ENCODE measurements at regions of chr12 and their contacts with region 1.

Region 1: GRCh38 chr12:89524541-89525285 is at the start of gene GALNT4:
- DNase-seq: peak; percentile 95
- total RNA-seq, gene GALNT4: 2.0 TPM

Region 2: GRCh38 chr12:88141770-88142609 is 1382.7 kb before region 1 on chr12 and contains the starts of genes CEP290 and TMTC3:
- intact Hi-C with region 1: loop called (anchors 5 kb)
- DNase-seq: peak; percentile 97
- total RNA-seq, gene CEP290: 10.0 TPM
- total RNA-seq, gene TMTC3: 12.2 TPM

Region 3: GRCh38 chr12:89019408-89020120 is 505.1 kb before region 1 on chr12:
- intact Hi-C with region 1: loop called (anchors 5 kb)
- DNase-seq: peak; percentile 80

Region 4: GRCh38 chr12:89288959-89289358 is 235.8 kb before region 1 on chr12:
- intact Hi-C with region 1: no loop called
- DNase-seq: no peak

Region 5: GRCh38 chr12:89470741-89471509 is 53.8 kb before region 1 on chr12:
- intact Hi-C with region 1: loop called (anchors 2 kb)
- DNase-seq: no peak